IMR-90 (cell line): ENCODE measurements at regions of chr5 and their contacts with region 1.

Region 1: DNA sequence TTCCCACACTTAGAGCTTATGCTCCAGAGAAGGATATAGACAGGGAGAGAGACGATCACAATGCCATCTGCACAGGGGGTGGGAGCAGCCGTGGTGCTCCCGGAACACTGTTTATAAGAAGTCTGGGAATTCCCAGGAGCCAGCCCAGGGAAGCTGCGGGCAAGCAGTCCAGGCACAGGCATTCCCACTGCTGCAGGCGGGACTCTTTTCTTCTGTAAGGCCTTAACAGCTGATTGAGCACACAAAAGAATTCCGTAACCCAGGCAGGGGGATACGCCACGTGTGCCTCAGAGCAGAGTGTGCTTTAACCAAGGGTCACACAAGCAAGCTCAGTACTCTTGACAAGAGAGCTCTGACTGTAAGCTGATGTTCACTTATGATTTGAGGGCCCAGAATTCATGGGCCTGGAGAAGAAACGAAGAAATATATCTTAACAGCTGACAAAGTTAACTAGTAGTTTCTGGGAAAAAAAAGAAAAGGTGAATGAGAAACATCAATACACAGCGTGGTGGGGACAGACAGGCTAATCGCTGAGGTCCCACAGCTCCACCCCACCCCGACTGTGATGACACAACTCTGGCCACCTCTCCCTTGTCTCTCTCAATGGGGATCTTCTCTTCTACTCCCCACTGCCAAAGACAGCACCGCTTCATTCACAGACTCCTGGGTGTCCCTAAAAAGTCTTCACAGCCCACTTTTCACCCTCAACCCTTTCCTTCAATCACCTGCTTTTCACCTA is 85.9 kb upstream of the SIMC1 start:
- DNase-seq: peak; percentile 48
- ATAC-seq: peak; percentile 5; the same call in 1 of the 2 replicates
- H3K4me3 ChIP-seq: no peak overlapping the region
- H3K27ac ChIP-seq: no peak overlapping the region
- H3K4me1 ChIP-seq: peaks cover 21% of the 10 kb centered on the region
- H3K27me3 ChIP-seq: peaks cover 2% of the 10 kb centered on the region; the same call in 1 of the 2 replicates
- CTCF ChIP-seq: no peak
- POLR2A ChIP-seq: no peak
- RAD21 ChIP-seq: no peak

Region 2: DNA sequence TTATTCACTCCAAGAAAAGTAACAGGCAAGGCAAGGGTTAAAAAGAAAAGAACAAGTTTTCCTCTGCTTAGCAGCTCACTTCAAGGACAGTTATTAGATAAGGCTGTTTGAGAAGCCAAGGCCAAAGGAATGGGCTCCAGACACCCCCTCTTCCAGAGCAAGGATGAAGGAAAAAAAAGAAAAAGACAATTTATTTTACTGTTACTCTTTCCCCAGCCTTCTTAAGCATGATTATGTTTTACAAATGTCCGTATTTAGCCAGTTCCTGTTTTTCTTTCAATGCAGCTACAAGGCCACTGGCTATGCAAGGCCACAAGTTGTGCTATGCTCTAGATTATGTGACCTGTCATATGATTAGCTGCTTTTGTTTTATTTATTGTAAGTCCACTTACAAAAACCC is 20.6 kb before region 1 on chr5:
- CTCF ChIA-PET with region 1: no interaction called
- POLR2A ChIA-PET with region 1: no interaction called
- dilution Hi-C with region 1: no loop called
- in situ Hi-C with region 1: no loop called
- intact Hi-C with region 1: loop called (anchors 1 kb)
- DNase-seq: no peak
- ATAC-seq: no peak
- H3K4me3 ChIP-seq: no peak overlapping the region
- H3K27ac ChIP-seq: no peak overlapping the region
- H3K4me1 ChIP-seq: no peaks in the 10 kb centered on the region
- H3K27me3 ChIP-seq: peaks cover 27% of the 10 kb centered on the region
- CTCF ChIP-seq: no peak
- POLR2A ChIP-seq: no peak
- RAD21 ChIP-seq: no peak

Region 3: GRCh38 chr5:176361437-176362232 is 209.3 kb after region 1 on chr5 and contains the start of gene KIAA1191:
- CTCF ChIA-PET with region 1: no interaction called
- POLR2A ChIA-PET with region 1: no interaction called
- dilution Hi-C with region 1: no loop called
- in situ Hi-C with region 1: no loop called
- intact Hi-C with region 1: loop called (anchors 5 kb)
- DNase-seq: peak; percentile 87
- ATAC-seq: peak; percentile 85
- H3K4me3 ChIP-seq: peak within 1 kb of the TSS; percentile 90
- H3K27ac ChIP-seq: peak within 1 kb of the TSS; percentile 91
- H3K4me1 ChIP-seq: peaks cover 7% of the 10 kb centered on the region
- H3K27me3 ChIP-seq: no peaks in the 10 kb centered on the region
- CTCF ChIP-seq: peak; percentile 37
- POLR2A ChIP-seq: peak; percentile 95
- RAD21 ChIP-seq: peak; percentile 36; the same call in 1 of the 2 replicates
- total RNA-seq, gene KIAA1191: 107 and 124 TPM in 2 replicates